Right ventricle myocardium inferior (tissue), 1 donor: ENCODE measurements at regions of chr9 and their contacts with region 1.

Region 1: DNA sequence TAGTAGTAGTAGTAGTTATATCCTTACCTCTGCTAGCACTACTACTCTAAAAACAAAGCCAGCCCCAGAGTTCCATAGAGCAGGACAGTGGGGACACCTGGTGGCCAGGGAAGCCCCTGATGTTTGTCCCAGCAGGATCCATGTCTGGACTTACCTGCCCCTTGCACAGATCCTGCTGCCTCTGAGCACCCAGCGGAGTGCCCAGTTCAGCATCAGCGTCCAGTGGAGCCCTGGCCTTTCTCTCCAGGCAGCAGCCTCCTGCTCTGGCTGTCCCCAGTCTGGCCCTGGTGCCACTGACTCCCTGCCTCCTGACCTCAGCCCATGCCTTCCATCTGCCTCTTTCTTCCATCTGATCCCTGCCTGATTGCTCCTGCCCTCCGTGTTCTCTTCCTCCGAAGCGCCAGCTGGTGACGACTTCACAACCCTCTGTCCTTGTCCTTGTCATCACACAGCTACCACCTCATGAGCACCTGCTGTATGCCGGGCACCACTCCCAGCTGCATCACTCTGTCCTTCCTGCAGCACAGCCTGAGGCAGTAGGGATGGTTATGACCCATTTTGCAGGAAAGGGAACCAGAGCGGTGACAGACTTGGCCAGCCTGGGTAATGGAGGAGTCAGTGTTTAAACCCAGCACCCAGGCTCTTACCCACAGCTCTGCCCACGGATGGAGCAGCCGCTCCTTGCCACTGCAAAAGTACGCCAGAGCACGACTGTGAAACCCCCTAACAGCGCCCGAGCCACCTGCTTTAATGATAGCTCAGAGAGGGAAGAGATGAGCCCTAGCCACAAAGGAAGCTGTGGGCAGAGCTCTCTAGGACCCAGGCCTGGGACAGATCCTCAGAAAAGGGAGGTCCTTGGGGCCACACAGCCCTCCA is 11.5 kb downstream of the SARDH start:
- DNase-seq: no peak
- ATAC-seq: peak; percentile 88

Region 2: GRCh38 chr9:133417541-133418461 is 308.8 kb before region 1 on chr9 and contains the start of gene REXO4:
- intact Hi-C with region 1: loop called (anchors 10 kb)
- DNase-seq: peak; percentile 92
- ATAC-seq: peak; percentile 97
- total RNA-seq, gene REXO4: 18.7 TPM

Region 3: GRCh38 chr9:133532937-133533668 is 193.5 kb before region 1 on chr9:
- intact Hi-C with region 1: loop called (anchors 1 kb)
- DNase-seq: no peak
- ATAC-seq: peak; percentile 42

Region 4: DNA sequence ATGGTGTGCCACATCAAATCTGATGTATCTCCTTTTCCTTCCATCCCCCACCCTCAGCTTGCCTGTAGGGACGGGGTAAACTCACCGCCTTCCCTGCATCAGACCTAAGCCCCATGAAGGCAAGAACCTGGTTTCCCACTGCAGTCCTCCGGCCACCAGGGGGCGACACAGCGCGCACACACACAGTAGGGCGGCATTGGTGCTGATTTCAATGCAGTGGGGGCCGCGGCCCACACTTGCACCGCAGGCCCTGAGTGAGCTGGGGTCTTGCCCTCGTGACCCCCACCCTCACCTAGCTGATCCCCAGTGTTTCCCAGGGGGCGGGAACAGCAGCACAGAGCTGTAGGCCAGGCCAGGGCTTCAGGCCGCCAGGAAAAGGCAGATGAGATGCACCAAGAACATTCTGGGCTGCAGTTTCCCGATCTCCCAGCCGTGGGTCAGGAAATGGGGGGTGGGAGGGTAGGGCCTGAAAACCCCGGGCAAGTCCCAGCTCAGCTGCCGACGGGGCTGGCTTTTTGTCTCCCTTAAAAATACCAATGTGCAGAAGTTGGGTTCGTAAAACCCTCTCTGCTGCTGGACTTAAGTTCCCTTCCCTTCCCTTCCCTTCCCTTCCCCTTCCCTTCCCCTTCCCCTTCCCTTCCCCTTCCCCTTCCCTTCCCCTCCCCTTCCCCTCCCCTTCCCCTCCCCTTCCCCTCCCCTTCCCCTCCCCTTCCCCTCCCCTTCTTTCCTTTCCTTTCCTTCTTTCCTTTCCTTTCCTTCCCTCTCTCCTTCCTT is 137.0 kb before region 1 on chr9:
- intact Hi-C with region 1: loop called (anchors 10 kb)
- DNase-seq: peak; percentile 35
- ATAC-seq: no peak